Right cardiac atrium (tissue), 5 donors: ENCODE measurements at regions of chr14 and their contacts with region 1.

Region 1: GRCh38 chr14:35341446-35342159 is 49.4 kb downstream of the PSMA6 start:
- DNase-seq: peak; percentile 98 to 99 (median 98)
- ATAC-seq: peak; percentile 93 to 95
- H3K4me3 ChIP-seq: peak overlapping the region; percentile 6
- H3K27ac ChIP-seq: peak overlapping the region; percentile 95
- H3K4me1 ChIP-seq: peaks cover 31% of the 10 kb centered on the region
- H3K27me3 ChIP-seq: no peaks in the 10 kb centered on the region

Region 2: DNA sequence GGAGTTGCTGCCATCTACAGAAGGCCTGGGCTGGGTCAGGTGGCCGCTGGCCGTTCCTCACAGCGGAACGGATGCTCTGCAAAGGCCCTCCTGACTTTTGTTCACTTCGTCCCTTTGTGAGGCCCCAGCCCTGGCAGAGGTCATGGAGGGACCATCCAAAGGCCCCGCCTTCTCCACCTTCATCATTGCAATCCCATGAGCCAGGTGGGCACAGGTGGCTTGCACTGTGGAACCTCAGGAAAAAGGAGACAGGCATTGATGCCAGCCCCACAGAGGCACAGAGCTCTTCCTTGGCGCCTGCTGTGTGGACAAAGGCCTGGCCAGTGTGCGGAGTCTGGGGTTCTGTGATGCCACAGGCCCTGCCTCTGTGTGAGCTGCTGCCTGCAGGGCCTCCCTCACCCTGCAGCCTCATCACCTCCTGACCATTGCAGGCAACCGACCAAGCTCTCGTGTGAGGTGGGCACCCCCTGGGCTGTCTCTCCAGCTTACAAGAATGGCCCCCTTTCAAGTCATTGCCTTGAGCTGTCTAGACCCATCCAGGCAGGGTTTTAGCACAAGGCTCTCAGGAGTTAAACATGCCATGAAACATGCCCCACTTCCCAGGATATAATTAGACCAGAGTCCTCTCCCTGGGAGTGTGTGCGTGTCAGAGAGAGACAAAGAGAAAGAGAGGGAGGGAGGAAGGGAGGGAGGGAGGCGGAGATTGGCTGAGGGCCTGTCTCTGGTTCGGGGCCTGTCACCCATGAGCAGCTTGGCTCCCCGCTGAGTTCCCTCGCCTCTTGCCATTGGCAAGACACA is 43.6 kb after region 1 on chr14:
- intact Hi-C with region 1: loop called in 1 of 4 experiments (anchors 5 kb)
- DNase-seq: peak; percentile 88 to 94 (median 94)
- ATAC-seq: peak; percentile 93 to 96
- H3K4me3 ChIP-seq: no peak overlapping the region
- H3K27ac ChIP-seq: peak overlapping the region; percentile 84
- H3K4me1 ChIP-seq: peaks cover 18% of the 10 kb centered on the region
- H3K27me3 ChIP-seq: no peaks in the 10 kb centered on the region